OCI-LY7 (cell line): ENCODE measurements at regions of chr5 and their contacts with region 1.

Region 1: GRCh38 chr5:43120720-43121564 is at the start of gene ZNF131:
- DNase-seq: peak; percentile 98
- H3K4me3 ChIP-seq: peak within 1 kb of the TSS; percentile 80
- H3K27ac ChIP-seq: peak within 1 kb of the TSS; percentile 77
- H3K4me1 ChIP-seq: peaks cover 35% of the 10 kb centered on the region
- CTCF ChIP-seq: no peak
- total RNA-seq, gene ZNF131: 59.0 and 61.0 TPM in 2 replicates

Region 2: DNA sequence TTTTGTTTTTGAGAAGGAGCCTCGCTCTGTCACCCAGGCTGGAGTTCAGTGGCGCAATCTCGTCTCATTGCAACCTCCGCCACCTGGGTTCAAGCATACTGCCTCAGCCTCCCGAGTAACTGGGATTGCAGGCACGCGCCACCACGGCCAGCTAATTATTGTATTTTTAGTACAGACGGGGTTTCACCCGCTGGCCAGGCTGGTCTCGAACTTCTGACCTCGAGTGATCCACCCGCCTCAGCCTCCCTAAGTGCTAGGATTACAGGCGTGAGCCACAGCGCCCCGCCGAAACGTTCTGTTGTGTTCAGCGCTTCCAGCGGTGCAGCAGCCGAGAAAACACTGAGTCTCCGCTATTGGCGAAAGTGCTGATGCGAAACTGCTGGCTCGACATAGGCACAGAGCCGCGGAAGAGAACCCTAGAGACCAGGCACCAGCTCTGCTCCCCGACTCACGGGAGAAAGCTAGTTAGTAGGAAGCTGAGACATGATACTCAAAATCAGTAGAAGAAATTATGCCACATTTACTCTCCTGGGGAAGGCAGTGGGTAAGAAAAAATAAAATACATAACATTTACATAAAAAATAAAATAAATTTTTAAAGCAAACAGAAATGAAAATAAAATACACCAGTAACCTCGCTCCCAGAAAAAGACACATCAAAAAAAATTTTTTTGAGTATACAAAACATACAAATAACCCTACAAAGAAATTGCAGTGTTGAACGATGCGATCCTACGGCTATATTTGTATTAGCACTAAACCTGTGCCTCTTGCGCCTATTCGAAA is 112.4 kb before region 1 on chr5:
- CTCF ChIA-PET with region 1: interaction called, 3 read pairs
- POLR2A ChIA-PET with region 1: interaction called, 11 read pairs
- intact Hi-C with region 1: loop called (anchors 1 kb)
- DNase-seq: peak; percentile 96
- H3K4me3 ChIP-seq: peak overlapping the region; percentile 70
- H3K27ac ChIP-seq: peak overlapping the region; percentile 86
- H3K4me1 ChIP-seq: peaks cover 32% of the 10 kb centered on the region
- CTCF ChIP-seq: peak; percentile 66

Region 3: DNA sequence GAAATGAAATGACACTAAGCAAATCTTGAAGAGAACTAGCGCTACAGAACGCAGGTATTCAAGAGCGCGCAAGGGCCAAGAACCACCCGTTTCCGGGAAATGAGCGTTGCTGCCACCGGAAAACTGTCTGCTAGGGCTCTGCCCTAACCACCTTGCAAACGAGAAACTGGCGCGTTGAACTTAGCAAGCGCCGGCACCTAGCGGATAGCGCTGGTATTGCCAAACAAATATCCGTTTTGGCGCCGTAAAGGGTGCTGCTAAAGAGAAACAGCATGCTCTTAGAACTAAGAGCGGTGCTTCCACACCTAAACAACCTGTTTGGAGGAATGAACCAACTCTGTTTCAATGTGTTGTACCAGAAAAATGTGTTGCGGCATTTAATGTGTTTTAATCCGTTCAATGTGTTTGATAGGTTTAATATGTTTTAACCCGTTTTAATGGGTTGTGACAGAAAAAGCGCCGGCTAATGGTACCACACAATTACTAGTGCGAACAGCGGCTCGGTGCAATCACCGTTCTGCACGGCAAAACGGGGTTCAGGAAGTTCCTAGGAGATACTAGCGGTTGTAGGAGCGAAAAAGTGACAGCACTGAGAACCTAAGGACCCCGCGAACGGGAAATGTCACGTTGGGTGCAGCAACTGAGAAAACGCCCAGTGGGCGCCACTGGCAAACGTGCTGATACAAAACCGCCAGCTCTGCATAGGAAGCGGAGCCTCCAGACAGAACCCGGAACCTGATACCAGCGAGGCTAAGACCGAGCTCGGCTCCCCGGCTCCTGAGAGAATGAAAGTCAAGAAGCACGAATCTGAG is 80.4 kb before region 1 on chr5 and contains the start of gene ANXA2R:
- CTCF ChIA-PET with region 1: interaction called, 3 read pairs
- POLR2A ChIA-PET with region 1: interaction called, 29 read pairs
- intact Hi-C with region 1: loop called (anchors 1 kb)
- DNase-seq: peak; percentile 98
- H3K4me3 ChIP-seq: peak within 1 kb of the TSS; percentile 70
- H3K27ac ChIP-seq: peak within 1 kb of the TSS; percentile 95
- H3K4me1 ChIP-seq: peaks cover 34% of the 10 kb centered on the region
- CTCF ChIP-seq: peak; percentile 77
- total RNA-seq, gene ANXA2R: 13.5 and 15.4 TPM in 2 replicates

Region 4: DNA sequence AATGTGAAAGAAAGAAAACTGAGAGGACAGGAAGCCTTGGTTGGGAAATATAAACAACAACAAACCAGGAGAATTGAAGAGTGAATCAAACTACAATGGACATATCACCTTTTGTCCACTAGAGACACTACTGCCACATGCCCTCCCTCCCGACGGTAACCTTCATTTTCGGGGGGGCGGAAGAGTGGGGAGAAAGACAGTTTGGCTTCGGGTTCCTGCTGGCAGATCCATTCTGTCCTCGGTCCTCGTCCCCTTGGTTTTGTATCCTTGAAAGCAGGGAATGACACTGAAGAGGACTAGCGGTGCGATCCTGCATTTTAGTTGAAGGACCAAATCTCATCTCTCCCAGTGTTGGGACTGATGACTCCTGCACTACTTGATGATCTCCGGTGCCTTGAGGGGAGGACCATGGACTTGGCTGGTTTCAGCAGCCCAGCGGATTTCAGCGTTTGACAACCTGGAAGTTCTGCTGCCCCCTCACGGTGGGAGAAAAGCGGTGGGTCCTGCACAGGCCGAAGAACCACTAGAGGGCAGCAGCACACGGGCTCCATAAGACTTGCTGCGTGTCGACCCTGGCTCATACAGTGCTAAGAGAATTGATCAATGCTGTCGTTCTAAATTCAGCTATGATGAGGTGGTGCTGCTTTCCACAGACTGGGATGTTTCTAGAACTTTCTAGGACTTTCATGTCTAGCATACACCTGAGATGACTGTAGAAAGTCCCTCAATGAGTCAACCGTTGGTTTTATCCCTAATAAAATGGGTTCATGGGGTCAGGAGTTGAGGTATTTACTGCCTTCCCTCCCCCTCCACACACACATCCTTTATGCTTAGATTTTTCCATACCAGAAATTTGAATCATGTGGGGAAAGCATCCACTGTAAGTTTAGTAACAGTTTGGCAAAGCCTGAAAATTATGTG is 15.3 kb before region 1 on chr5:
- CTCF ChIA-PET with region 1: interaction called, 3 read pairs
- POLR2A ChIA-PET with region 1: interaction called, 8 read pairs
- intact Hi-C with region 1: loop called (anchors 1 kb)
- DNase-seq: peak; percentile 93
- H3K4me3 ChIP-seq: peak overlapping the region; percentile 65
- H3K27ac ChIP-seq: peak overlapping the region; percentile 20
- H3K4me1 ChIP-seq: peaks cover 4% of the 10 kb centered on the region
- CTCF ChIP-seq: peak; percentile 100

Region 5: DNA sequence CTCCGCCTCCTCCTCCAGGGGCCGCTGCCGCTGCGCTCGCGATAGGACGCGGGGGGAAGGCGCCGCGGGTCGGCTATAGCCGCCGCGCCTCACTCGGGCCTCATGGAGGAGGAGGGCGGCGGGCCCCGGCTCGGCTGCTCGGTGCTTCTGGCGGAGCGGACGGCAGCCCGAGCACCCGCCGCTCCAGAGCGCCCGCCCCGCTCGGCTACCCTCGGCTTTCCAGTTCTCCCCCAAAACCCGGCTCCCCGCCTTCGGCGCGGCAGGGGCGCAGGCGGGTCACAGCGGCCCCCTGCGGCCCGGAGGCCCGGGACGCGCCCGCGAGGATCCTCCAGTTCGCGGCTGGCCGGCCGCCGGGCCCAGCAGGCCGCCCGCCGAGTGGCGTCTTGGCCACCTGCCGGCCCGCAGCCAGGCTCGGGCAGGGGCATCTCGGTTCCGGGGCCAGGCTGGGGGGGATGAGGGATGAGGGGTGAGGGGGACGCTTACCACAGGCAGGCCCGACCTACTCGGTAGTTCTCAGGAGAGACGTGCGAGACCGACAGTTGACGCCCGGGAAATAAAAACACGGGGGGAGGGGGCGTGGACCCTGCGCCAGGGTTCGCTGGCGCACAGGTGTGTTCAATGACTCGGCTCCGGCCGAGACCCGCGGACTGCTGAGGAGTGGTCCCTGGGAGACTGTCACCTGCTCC is 436.1 kb after region 1 on chr5 and contains the start of gene PAIP1:
- CTCF ChIA-PET with region 1: no interaction called
- POLR2A ChIA-PET with region 1: no interaction called
- intact Hi-C with region 1: loop called (anchors 1 kb)
- DNase-seq: peak; percentile 89
- H3K4me3 ChIP-seq: peak within 1 kb of the TSS; percentile 75
- H3K27ac ChIP-seq: peak within 1 kb of the TSS; percentile 77
- H3K4me1 ChIP-seq: peaks cover 35% of the 10 kb centered on the region
- CTCF ChIP-seq: peak; percentile 80
- total RNA-seq, gene PAIP1: 52.8 and 69.2 TPM in 2 replicates